CD8-positive, alpha-beta T cell (primary cell): ENCODE measurements at regions of chr20 and their contacts with region 1.

Region 1: DNA sequence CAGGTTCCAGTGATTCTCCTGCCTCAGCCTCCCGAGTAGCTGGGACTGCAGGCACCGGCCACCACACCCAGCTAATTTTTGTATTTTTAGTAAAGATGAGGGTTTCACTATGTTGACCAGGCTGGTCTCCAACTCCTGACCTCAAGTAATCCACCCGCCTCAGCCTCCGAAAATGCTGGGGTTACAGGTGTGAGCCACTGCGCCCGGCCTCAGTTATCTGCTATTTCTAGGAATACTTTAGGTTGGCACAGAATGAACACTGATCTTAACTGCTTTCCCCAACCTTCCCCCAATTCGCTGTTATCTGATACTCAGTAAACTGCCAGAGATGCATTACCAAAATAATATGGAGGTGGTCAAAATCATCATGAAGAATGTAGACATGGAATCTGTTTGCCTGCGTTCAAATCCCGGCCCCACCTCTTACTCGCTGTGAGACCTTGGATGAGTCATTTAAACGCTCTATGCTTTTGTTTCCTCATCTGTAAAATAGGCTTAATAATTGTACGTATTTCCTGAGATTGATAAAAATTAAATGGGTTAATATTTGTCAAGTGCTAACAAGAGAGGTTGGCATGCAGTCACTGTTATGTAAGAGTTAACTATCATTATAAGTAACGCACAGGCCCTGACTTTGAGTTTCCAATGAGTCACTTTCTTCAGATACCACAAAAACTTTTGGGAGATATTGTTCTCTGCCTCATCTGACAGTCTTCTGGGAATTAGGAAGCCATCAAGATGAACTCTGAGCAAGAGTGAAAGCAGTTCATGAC is 44.5 kb upstream of the NCOA3 start:
- DNase-seq: no peak
- ATAC-seq: no peak
- H3K4me3 ChIP-seq: no peak overlapping the region
- H3K4me3 Mint-ChIP-seq: no peak overlapping the region
- H3K27ac ChIP-seq: no peak overlapping the region
- H3K27ac Mint-ChIP-seq: no peak overlapping the region
- H3K4me1 ChIP-seq: no peaks in the 10 kb centered on the region
- H3K4me1 Mint-ChIP-seq: no peaks in the 10 kb centered on the region
- H3K27me3 ChIP-seq: no peaks in the 10 kb centered on the region
- H3K27me3 Mint-ChIP-seq: no peaks in the 10 kb centered on the region
- CTCF ChIP-seq: no peak

Region 2: DNA sequence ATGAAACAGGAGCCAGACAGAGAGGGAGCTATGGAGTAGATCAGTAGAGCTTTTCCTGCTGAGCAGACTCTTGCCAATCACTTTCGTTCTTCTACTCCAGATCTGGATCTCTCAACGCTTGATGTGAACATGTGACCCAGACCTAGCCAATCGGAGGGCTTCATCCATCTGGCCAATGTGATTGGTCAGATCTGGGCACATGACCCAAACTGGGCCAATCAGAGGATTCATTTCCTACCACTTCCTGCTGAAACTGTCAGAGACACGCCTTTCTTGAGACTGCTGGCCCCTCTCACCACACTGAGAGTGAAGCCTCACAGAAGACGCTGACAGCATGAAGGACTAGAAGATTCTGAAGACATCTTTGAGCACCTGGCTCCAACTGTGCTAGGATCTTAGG is 56.5 kb before region 1 on chr20:
- CTCF ChIA-PET with region 1: no interaction called
- POLR2A ChIA-PET with region 1: no interaction called
- intact Hi-C with region 1: loop called in 1 of 2 experiments (anchors 5 kb)
- DNase-seq: no peak
- ATAC-seq: no peak
- H3K4me3 ChIP-seq: no peak overlapping the region
- H3K4me3 Mint-ChIP-seq: no peak overlapping the region
- H3K27ac ChIP-seq: no peak overlapping the region
- H3K27ac Mint-ChIP-seq: no peak overlapping the region
- H3K4me1 ChIP-seq: no peaks in the 10 kb centered on the region
- H3K4me1 Mint-ChIP-seq: peaks cover 5% of the 10 kb centered on the region
- H3K27me3 ChIP-seq: no peaks in the 10 kb centered on the region
- H3K27me3 Mint-ChIP-seq: no peaks in the 10 kb centered on the region
- CTCF ChIP-seq: no peak